SK-MEL-5 (cell line): ENCODE measurements at regions of chr15 and their contacts with region 1.

Region 1: DNA sequence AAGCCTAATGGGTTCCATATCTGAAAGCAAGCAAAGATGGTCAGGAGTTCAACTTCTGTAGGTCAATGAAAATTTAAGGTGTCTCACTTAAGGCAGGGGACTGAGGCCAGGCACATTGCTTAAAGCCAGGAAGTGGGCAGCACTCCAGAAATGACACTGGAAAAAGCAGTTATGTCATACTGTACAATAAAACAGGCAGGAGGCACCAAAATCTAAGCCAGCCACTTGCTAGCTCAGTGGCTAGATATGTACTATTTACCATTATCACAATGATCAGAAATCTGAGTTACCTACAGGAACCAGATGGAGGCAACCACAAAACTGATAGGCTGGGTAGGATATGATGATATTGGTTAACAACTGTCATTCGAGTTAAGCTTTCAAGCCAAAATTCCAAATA is 57.3 kb downstream of the FRMD5 start:
- DNase-seq: peak; percentile 16

Region 2: GRCh38 chr15:44183363-44183762 is 45.6 kb after region 1 on chr15:
- in situ Hi-C with region 1: no loop called
- DNase-seq: no peak

Region 3: DNA sequence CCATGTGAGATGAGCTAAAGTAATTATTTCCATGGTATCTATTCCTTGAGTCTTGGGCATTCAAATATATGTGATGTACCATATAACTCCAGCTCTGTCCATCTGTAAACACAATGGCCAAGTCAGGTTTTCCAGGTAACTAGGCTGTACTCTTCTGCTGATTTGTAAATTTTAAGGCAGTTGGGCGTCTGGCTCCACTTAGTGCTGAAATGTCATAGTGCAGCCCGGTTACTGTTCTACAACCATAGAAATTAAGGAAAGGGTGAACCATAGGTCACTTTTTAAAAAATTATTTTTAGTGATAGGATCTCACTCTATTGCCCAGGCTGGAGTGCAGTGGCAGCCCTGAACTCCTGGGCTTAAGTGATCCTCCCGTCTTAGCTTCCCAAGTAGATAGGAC is 106.1 kb after region 1 on chr15:
- in situ Hi-C with region 1: loop called (anchors 25 kb)
- DNase-seq: peak; percentile 34